ENCODE measurements at regions of chr14 and their contacts with region 1.

Region 1: DNA sequence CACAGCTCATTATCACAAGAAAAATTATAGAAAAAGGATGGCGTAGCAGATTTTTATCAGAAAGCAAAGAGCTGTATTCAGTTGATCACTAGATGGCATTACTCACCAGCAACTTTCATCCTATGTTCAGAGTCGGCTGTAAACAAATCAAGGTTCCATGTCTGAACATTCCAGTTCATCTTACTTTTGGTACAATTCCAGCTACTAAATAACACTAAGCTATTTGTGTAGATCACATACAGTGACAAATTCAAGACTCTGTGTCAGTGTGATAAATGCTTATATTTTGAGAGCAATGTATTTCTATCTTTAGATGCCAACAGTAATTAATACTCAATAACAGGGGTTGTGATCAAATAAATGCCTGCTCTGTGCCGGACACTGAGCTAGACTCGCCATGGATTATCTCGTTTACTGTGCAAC is 30.1 kb downstream of the NRDE2 start:
- DNase-seq: no peak
- H3K4me3 Mint-ChIP-seq: no peak overlapping the region
- H3K27ac Mint-ChIP-seq: no peak overlapping the region
- H3K4me1 Mint-ChIP-seq: no peaks in the 10 kb centered on the region
- H3K27me3 Mint-ChIP-seq: no peaks in the 10 kb centered on the region
- CTCF ChIP-seq: no peak

Region 2: DNA sequence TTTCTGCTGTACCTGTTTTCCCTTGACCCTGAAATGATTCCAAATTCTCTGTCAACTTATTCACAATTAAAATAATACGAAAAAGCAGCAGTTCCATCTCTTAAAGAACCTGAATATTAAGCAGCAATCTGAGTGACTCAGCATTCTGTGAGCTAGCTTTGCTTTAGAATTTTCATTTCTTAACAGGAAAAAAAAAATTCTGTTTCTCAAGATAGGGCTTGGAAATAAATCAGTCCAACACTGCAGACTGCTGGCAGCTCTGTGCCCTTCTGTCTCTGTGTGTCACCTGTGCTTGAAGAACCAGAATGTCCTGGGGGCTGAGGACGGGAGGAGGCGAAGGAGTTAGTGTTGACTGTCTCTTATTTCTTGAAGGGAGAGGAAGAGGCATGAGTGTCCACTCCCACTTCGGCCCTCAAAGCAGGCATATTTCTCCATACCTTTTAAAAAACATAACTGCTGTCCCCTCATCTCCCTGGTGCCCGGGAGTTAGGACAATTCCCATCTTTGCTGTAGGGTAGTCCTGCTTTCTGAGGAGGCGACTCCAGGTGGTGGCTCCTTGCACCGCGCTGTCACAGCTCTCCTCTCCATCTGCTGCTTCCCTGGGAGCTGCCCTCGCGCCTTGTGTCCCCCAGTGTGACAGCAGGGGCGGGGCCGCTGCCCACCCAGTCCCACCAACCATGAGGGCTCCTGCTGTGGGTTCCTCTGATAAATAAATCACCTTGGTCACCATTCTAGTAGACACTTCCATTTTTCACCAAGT is 298.2 kb after region 1 on chr14:
- CTCF ChIA-PET with region 1: interaction called, 5 read pairs
- intact Hi-C with region 1: loop called (anchors 5 kb)
- DNase-seq: peak; percentile 14
- H3K4me3 Mint-ChIP-seq: no peak overlapping the region
- H3K27ac Mint-ChIP-seq: peak overlapping the region; percentile 72
- H3K4me1 Mint-ChIP-seq: no peaks in the 10 kb centered on the region
- H3K27me3 Mint-ChIP-seq: no peaks in the 10 kb centered on the region
- CTCF ChIP-seq: no peak

Region 3: DNA sequence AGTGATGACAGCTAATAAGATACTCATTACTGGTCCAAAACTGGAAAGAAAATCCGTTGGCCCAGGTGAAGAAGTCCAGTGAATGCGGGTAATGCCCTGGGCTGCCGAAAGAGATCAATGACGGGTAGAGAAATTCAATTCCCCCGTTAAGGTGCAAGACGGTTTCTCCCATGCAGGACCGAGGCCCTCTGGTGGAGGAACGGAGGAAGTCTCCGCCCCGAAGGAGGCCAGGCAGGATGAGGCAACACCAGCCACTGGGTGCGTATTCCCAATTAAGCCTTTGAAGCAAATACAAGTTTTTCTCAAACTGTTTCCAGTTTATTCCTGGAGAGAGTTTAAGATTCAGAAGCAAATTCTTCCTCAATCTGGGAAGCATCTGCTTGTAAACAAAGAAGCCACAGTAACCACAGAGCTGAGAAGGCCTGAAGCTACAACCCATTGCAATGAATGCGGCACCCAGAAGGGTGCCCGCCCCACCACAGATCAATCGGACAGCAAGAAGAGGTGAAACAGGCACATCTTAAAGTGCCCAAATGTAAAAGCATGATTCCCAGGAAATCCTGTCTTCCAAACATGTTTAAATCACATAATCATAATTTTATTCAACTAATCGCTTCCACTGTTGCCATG is 396.0 kb after region 1 on chr14:
- CTCF ChIA-PET with region 1: interaction called, 15 read pairs
- intact Hi-C with region 1: loop called (anchors 1 kb)
- DNase-seq: peak; percentile 85
- H3K4me3 Mint-ChIP-seq: no peak overlapping the region
- H3K27ac Mint-ChIP-seq: no peak overlapping the region
- H3K4me1 Mint-ChIP-seq: no peaks in the 10 kb centered on the region
- H3K27me3 Mint-ChIP-seq: no peaks in the 10 kb centered on the region
- CTCF ChIP-seq: peak; percentile 76

Region 4: DNA sequence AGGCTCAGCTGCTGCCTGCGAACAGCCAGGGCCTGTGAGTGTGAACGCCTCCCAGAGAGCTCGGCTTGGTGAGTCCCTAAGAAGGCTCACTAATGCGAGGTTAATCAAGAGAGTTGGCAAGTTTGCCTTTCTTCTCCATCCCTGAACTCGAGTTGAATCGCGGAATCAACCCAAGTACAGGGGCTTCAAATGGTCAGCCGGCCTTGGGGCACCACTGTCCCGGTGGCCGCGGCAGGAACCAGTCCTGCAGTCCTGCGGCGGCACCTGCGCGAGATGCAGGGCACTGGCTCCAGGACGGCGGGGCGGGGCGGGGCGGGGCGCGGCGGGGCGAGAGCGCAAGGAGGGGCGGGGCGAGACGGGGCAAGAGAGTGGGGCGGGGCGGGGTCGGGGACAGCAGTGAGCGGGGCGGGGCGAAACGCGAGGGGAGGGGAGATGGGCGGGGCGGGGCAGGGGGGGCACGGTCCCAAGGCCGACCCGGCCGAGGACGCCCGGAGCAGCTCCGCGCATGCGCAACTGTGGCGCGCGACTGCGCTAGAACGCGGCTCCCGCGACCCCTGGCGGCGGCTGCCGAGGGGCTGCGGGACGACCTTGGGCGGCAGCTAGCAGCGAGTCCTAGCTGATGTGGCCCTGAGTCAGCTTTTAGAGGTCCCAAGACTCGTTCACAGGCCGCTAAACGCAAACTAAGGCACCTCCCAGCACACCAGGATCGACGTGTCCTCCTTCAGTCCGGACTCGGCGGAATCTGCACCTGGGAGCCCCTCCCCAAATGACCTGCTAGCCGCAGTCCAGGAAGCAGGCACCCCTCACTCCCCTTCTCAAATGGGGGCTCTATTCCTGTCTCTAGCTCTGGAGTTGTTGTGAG is 456.6 kb after region 1 on chr14:
- CTCF ChIA-PET with region 1: interaction called, 13 read pairs
- intact Hi-C with region 1: loop called (anchors 5 kb)
- DNase-seq: peak; percentile 96
- H3K4me3 Mint-ChIP-seq: peak overlapping the region; percentile 52
- H3K27ac Mint-ChIP-seq: no peak overlapping the region
- H3K4me1 Mint-ChIP-seq: no peaks in the 10 kb centered on the region
- H3K27me3 Mint-ChIP-seq: no peaks in the 10 kb centered on the region
- CTCF ChIP-seq: peak; percentile 73

Measured in Calu3 (cell line).